Activated CD4-positive, alpha-beta T cell treated with anti-CD3 and anti-CD28 coated beads for 36 hours (primary cell): ENCODE measurements at regions of chr20 and their contacts with region 1.

Region 1: GRCh38 chr20:5529331-5530148 is 212.8 kb upstream of the PROKR2 start:
- DNase-seq: peak; percentile 96
- ATAC-seq: peak; percentile 96
- H3K4me3 Mint-ChIP-seq: peak overlapping the region; percentile 36
- H3K27ac Mint-ChIP-seq: peak overlapping the region; percentile 55
- H3K4me1 Mint-ChIP-seq: peaks cover 23% of the 10 kb centered on the region
- H3K27me3 Mint-ChIP-seq: no peaks in the 10 kb centered on the region

Region 2: DNA sequence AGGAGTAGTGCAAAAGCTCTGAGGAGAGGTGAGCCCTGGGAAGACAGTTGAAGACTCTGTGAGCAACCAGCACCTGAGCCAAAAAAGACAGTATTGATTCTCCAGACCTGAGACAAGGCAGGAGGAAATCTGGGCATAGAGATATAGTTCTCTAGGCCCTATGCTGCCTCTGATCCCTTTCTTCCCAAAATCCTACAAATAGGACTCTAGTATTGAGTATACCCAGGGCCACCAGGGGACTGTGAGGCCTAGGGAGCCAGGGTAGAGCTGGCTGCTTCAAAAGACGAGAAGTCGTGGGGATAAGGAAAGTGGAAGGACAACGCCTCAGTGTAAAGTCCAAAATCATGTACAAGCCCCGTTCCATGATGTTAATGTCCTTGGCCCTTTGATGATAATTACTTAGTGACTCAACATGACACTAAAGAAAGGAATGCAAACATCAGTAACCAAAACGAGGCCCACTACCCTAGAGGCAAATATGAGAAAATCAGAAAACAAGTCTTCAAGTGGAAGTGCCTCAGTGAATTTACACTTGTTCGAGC is 15.5 kb before region 1 on chr20:
- CTCF ChIA-PET with region 1: interaction called, 13 read pairs
- POLR2A ChIA-PET with region 1: no interaction called
- intact Hi-C with region 1: no loop called
- DNase-seq: no peak
- ATAC-seq: no peak
- H3K4me3 Mint-ChIP-seq: no peak overlapping the region
- H3K27ac Mint-ChIP-seq: no peak overlapping the region
- H3K4me1 Mint-ChIP-seq: peaks cover 4% of the 10 kb centered on the region
- H3K27me3 Mint-ChIP-seq: no peaks in the 10 kb centered on the region

Region 3: DNA sequence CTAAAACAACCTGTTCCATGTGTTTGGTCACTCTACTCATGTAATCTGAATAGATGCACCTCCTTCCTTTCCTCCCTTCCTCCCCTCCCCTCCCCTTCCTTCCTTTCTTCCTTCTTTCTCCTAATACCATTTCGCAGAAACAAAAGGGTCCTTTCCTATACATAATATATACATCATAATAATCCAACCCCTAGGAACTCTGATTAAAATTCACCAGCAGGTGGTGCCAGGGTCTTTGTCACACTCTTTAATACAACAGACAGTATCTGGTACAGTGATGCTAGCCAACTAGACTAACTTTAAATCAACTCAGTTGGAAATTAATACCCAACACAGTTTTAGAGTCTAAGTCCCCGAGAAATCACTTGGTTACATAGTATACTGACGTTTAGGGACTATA is 39.5 kb after region 1 on chr20:
- CTCF ChIA-PET with region 1: interaction called, 44 read pairs
- POLR2A ChIA-PET with region 1: no interaction called
- intact Hi-C with region 1: loop called in 1 of 2 experiments (anchors 1 kb)
- DNase-seq: peak; percentile 68
- ATAC-seq: peak; percentile 89
- H3K4me3 Mint-ChIP-seq: no peak overlapping the region
- H3K27ac Mint-ChIP-seq: peak overlapping the region; percentile 23
- H3K4me1 Mint-ChIP-seq: peaks cover 36% of the 10 kb centered on the region
- H3K27me3 Mint-ChIP-seq: no peaks in the 10 kb centered on the region

Region 4: DNA sequence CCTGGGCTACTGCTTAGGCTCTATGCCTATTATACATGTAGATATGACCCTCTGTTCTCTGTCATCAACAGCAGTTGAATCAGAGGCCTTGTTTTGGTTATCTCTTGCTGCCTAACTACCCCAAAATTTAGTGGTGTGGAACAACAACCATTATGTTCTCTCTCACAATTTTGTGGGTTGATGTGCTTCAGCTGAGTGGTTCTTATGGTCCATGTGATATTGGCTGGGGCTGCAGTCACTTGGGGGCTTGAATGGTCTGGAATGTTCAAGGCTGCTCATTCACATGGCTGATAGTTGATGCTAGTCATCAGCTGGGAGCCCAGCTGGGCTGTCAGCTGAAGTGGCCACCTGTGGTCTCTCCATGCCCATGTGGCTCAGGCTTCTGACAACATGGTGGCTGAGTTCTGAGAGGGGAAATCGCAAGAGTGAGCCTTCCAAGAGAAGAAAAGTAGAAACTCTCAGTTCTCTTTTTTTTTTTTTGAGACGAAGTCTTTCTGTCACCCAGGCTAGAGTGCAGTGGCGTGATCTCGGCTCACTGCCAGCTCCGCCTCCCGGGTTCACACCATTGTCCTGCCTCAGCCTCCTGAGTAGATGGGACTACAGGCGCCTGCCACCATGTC is 268.4 kb after region 1 on chr20:
- CTCF ChIA-PET with region 1: interaction called, 10 read pairs
- POLR2A ChIA-PET with region 1: interaction called, 3 read pairs
- intact Hi-C with region 1: no loop called
- DNase-seq: no peak
- ATAC-seq: no peak
- H3K4me3 Mint-ChIP-seq: no peak overlapping the region
- H3K27ac Mint-ChIP-seq: no peak overlapping the region
- H3K4me1 Mint-ChIP-seq: peaks cover 7% of the 10 kb centered on the region
- H3K27me3 Mint-ChIP-seq: no peaks in the 10 kb centered on the region

Region 5: DNA sequence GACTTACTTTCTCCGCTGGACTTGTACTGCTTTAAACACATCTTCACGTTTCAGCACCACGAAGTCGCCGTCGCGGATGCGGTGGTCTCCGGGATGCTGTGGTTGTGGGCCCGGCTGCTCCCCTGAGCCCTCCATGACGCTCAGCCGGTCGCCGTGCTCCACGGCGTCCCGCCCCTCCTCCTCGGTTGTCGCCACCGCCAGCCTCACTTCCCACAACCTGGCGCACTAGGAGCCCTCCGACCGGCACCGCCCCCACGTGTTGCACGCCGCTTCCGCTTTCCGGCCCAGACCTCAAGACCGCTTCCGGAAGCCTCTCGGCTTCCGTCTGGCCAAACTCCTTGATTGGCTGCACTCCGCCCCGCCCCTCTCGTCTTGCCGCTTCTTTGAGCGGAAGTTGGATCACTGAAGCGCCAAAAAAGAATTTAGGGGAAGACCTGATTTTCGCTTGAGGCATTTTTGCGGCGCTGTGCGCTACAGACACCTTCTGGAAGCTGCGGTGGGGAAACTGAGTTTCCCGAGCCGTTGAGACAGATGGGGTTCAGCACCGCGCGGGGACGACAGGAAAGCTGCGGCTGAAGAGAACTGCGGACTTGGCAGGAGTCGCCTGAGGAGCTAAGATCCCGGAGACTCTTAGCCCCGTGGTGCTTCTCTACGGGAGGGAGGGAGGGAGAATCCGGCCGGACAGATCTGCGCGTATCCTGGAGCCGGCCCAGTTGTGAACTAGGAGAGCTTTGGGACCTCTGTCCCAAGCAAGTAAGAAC is 420.9 kb after region 1 on chr20 and contains the starts of genes MCM8 and TRMT6:
- CTCF ChIA-PET with region 1: interaction called, 17 read pairs
- POLR2A ChIA-PET with region 1: no interaction called
- intact Hi-C with region 1: loop called (anchors 1 to 2 kb)
- DNase-seq: peak; percentile 98
- ATAC-seq: peak; percentile 87
- H3K4me3 Mint-ChIP-seq: peak within 1 kb of the TSS; percentile 95
- H3K27ac Mint-ChIP-seq: peak within 1 kb of the TSS; percentile 96
- H3K4me1 Mint-ChIP-seq: peaks cover 49% of the 10 kb centered on the region
- H3K27me3 Mint-ChIP-seq: no peaks in the 10 kb centered on the region
- total RNA-seq, gene MCM8: 42.5 to 45.4 TPM
- total RNA-seq, gene TRMT6: 20.9 to 27.3 TPM

Region 6: GRCh38 chr20:6142348-6142993 is 612.9 kb after region 1 on chr20:
- CTCF ChIA-PET with region 1: no interaction called
- POLR2A ChIA-PET with region 1: no interaction called
- intact Hi-C with region 1: loop called in 1 of 2 experiments (anchors 5 kb)
- DNase-seq: peak; percentile 67
- ATAC-seq: peak; percentile 53
- H3K4me3 Mint-ChIP-seq: no peak overlapping the region
- H3K27ac Mint-ChIP-seq: no peak overlapping the region
- H3K4me1 Mint-ChIP-seq: no peaks in the 10 kb centered on the region
- H3K27me3 Mint-ChIP-seq: peaks cover 17% of the 10 kb centered on the region